ENCODE measurements at regions of chr9 and their contacts with region 1.

Region 1: DNA sequence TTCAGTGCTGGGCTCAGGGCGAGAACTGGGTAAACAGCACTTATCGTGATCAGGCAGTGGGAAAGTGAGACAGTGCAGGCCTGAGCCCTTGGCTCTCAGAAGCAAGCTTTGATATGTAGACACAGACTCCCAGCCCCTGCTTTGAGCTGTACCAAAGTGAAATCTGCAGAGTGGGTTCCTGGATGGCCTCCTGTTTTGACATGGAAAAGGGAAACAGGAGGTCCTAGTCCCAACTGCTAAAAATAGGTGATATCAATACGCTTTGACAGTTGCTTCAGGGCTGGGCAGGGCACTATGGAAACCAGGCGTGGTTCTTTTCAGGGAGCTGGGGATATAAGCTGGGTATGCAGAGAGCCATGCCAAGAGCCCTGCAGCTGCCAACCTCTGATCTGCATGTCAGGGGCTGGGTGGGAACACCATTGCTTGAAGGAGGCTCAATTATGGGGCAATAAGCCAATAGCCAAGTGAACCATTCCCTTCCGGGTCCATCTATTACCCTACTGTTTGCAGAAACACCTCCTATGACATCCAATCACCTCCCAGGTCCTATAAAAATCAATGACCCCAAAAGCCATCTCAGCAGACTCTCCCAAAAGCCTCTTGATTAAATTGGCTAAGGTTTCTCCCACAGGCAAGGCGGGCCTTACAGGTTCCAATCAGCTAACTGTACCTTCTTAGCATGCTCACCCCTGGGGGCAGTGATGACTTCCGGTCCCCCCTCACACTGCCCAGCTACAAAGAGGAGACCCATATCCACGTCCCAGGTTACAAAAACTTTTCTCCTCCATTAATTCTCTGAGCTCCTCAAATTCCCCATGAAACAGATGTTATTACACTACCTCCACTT is 45.8 kb downstream of the EPB41L4B start:
- DNase-seq: no peak
- ATAC-seq: no peak
- H3K4me3 ChIP-seq: no peak overlapping the region
- H3K27ac ChIP-seq: no peak overlapping the region
- H3K4me1 ChIP-seq: no peaks in the 10 kb centered on the region
- H3K27me3 ChIP-seq: peaks cover 10% of the 10 kb centered on the region
- CTCF ChIP-seq: no peak
- POLR2A ChIP-seq: no peak
- RAD21 ChIP-seq: no peak

Region 2: DNA sequence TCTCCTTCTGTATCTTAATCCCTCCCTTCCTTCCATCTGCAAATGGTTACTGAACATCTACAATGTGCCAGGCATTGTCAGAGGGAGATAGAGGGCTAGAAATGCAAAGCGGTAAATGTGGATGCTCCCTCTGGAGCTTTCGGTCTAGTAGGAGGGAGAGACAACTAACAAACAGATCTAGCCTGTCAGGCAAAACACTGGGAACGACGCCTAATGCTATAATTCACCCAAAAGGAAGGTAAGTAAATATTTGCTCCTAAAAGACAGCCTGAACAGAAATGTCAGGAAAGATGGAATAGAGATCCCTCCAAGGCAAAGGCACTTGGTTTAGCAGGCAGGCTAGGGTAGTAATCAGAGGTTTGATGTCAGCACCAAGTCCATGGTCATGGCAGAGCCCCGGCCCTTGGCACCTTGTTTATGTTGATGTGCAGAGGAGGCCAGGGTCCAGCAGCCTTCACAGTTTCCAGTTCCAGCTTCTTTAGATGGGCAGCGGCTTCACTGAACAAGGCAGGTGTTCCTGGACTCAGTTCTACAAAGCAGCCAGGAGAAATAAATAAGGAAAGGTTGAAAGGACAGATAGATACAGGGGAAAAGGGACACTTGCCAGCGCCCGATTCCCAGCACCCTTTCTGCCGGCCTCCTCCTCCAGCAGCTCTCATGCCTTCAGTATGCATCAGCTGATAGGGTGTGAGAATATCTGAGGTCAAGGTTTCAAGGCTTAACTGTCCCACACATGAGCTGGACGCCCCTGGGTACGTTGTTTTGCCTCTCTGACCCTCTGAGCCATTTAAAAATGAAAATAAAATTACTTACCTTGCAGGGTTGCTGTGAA is 61.6 kb before region 1 on chr9:
- CTCF ChIA-PET with region 1: no interaction called
- POLR2A ChIA-PET with region 1: no interaction called
- dilution Hi-C with region 1: no loop called
- in situ Hi-C with region 1: no loop called
- intact Hi-C with region 1: loop called (anchors 10 kb)
- DNase-seq: no peak
- ATAC-seq: no peak
- H3K4me3 ChIP-seq: no peak overlapping the region
- H3K27ac ChIP-seq: no peak overlapping the region
- H3K4me1 ChIP-seq: no peaks in the 10 kb centered on the region
- H3K27me3 ChIP-seq: peaks cover 25% of the 10 kb centered on the region
- CTCF ChIP-seq: no peak
- POLR2A ChIP-seq: no peak
- RAD21 ChIP-seq: no peak